GM12878 (cell line): ENCODE measurements at regions of chr6 and their contacts with region 1.

Region 1: DNA sequence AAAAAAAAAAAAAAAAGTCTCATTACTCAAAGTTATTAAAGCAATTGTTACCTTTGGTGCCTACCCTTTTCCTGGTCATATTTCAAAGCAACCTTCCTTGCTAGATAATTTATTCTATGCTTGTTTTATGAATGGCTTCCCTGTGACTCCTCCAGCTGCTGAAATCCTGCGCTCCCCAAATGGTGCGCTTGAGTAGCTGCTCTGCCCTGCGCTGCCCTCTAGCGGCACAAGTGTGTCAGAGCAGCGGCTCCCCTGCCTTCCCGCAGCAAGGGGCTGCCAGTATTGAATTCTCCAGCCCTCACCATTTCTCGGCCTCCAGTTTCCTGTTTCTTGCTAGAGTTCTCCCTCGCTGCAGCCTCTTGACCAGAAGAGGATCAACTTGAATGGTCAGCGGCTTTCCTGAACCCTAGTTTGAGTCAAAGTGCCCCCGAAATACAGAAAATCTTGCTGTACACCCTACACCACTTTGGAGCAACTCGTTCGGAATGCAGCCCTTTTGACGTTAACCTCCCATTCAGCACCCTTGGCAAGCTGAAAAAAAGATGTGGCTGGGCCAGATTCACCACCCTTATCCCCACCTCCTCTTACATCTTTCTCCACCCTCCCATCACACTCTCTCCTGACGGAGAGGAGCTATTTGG is 60.4 kb upstream of the KLHL31 start:
- DNase-seq: no peak
- ATAC-seq: peak; percentile 96
- H3K4me3 ChIP-seq: no peak overlapping the region
- H3K27ac ChIP-seq: no peak overlapping the region
- H3K4me1 ChIP-seq: no peaks in the 10 kb centered on the region
- H3K27me3 ChIP-seq: no peaks in the 10 kb centered on the region; a peak in 1 of 4 replicates
- CTCF ChIP-seq: peak; percentile 93 to 97 (median 95)
- EP300 ChIP-seq: no peak
- POLR2A ChIP-seq: no peak
- RAD21 ChIP-seq: peak; percentile 81

Region 2: DNA sequence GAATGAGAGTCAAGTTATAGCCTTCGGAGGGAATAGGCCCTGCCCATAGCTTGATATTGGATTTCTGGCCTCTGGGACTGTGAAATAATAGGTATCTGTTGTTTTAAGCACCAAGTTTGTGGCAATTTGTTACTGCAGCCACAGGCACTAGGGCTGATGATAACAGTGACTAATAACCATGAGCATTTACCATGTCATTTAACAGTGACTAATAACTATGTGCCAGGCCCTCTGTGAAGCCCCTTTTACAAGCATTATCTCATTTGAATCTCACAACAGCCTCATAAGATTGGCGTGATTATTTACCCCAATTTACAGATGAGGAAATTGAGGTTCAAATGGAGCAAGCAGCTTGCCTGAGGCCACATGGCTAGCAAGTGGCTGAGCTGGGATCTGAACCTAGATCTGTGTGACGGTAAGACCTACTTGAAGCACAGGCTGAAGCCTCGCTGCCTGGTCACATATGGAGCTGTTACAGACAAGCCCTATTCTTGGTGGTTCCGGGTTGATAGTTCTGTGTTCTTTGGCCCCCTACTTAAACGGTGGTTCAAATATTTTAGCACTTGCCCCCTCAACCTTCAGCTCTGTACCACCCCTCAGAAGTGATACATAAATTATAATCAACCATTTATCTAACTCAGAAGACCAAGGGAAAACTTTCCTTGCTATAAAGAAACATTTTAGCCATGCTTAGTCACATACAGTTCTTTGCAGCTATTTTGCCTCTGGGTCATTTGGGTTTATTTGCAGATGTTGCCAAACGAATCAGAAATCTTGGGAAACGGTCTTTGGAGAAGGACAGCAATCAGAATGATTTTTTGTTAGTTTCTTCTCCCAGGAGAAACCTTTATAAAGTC is 475.5 kb before region 1 on chr6:
- CTCF ChIA-PET with region 1: no interaction called
- POLR2A ChIA-PET with region 1: no interaction called
- RAD21 ChIA-PET with region 1: no interaction called
- SMC1A ChIA-PET with region 1: no interaction called
- in situ Hi-C with region 1: no loop called
- intact Hi-C with region 1: loop called (anchors 10 kb)
- DNase-seq: no peak
- ATAC-seq: peak; percentile 59
- H3K4me3 ChIP-seq: no peak overlapping the region
- H3K27ac ChIP-seq: no peak overlapping the region
- H3K4me1 ChIP-seq: peaks cover 3% of the 10 kb centered on the region
- H3K27me3 ChIP-seq: no peaks in the 10 kb centered on the region
- CTCF ChIP-seq: no peak
- EP300 ChIP-seq: no peak
- POLR2A ChIP-seq: no peak
- RAD21 ChIP-seq: no peak

Region 3: GRCh38 chr6:53544470-53545308 is 181.2 kb before region 1 on chr6 and contains the start of gene GCLC:
- CTCF ChIA-PET with region 1: interaction called, 5 read pairs
- POLR2A ChIA-PET with region 1: no interaction called
- RAD21 ChIA-PET with region 1: no interaction called
- SMC1A ChIA-PET with region 1: interaction called, 4 read pairs
- in situ Hi-C with region 1: no loop called
- intact Hi-C with region 1: loop called (anchors 5 kb)
- DNase-seq: peak; percentile 74
- ATAC-seq: peak; percentile 78
- H3K4me3 ChIP-seq: peak within 1 kb of the TSS; percentile 92
- H3K27ac ChIP-seq: peak within 1 kb of the TSS; percentile 61
- H3K4me1 ChIP-seq: peaks cover 9% of the 10 kb centered on the region
- H3K27me3 ChIP-seq: peaks cover 0 to 6% of the 10 kb centered on the region in 2 experiments; a peak in 1 of 4 replicates
- CTCF ChIP-seq: peak; percentile 55 to 65 (median 59); a peak in 5 of 6 replicates
- EP300 ChIP-seq: no peak; a peak in 1 of 4 replicates
- POLR2A ChIP-seq: peak; percentile 84
- RAD21 ChIP-seq: peak; percentile 44
- polyA plus RNA-seq, gene GCLC: 7.8 to 8.9 TPM

Region 4: DNA sequence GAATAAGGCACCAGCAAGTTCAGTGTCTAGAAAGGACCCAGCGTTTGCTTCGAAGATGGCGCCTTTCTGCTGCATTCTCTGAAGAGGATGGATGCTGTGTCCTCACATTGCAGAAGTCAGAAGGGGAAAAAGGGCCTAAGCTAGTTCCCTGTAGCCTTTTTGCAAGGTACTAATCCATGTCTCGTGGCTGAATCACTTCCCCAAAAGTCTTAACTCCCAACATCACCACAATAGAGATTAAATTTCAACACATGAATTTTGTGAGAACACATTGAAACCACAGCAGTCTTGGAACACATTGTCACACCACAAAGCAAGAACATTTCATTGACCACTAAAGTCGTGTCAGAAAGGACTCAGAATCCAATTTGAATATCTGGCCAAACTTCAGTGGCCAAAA is 102.4 kb before region 1 on chr6:
- CTCF ChIA-PET with region 1: no interaction called
- POLR2A ChIA-PET with region 1: no interaction called
- RAD21 ChIA-PET with region 1: no interaction called
- SMC1A ChIA-PET with region 1: no interaction called
- in situ Hi-C with region 1: no loop called
- intact Hi-C with region 1: no loop called
- DNase-seq: no peak
- ATAC-seq: no peak
- H3K4me3 ChIP-seq: no peak overlapping the region
- H3K27ac ChIP-seq: no peak overlapping the region
- H3K4me1 ChIP-seq: no peaks in the 10 kb centered on the region
- H3K27me3 ChIP-seq: peaks cover 2% of the 10 kb centered on the region in 2 experiments; a peak in 2 of 4 replicates
- CTCF ChIP-seq: no peak
- EP300 ChIP-seq: no peak
- POLR2A ChIP-seq: no peak
- RAD21 ChIP-seq: no peak

Region 5: GRCh38 chr6:53703047-53703446 is 22.9 kb before region 1 on chr6:
- CTCF ChIA-PET with region 1: interaction called, 116 read pairs
- POLR2A ChIA-PET with region 1: no interaction called
- RAD21 ChIA-PET with region 1: no interaction called
- SMC1A ChIA-PET with region 1: interaction called, 4 read pairs
- in situ Hi-C with region 1: no loop called
- intact Hi-C with region 1: no loop called
- DNase-seq: no peak
- ATAC-seq: no peak
- H3K4me3 ChIP-seq: no peak overlapping the region
- H3K27ac ChIP-seq: no peak overlapping the region
- H3K4me1 ChIP-seq: no peaks in the 10 kb centered on the region
- H3K27me3 ChIP-seq: no peaks in the 10 kb centered on the region
- CTCF ChIP-seq: no peak
- EP300 ChIP-seq: no peak
- POLR2A ChIP-seq: no peak
- RAD21 ChIP-seq: no peak

Region 6: DNA sequence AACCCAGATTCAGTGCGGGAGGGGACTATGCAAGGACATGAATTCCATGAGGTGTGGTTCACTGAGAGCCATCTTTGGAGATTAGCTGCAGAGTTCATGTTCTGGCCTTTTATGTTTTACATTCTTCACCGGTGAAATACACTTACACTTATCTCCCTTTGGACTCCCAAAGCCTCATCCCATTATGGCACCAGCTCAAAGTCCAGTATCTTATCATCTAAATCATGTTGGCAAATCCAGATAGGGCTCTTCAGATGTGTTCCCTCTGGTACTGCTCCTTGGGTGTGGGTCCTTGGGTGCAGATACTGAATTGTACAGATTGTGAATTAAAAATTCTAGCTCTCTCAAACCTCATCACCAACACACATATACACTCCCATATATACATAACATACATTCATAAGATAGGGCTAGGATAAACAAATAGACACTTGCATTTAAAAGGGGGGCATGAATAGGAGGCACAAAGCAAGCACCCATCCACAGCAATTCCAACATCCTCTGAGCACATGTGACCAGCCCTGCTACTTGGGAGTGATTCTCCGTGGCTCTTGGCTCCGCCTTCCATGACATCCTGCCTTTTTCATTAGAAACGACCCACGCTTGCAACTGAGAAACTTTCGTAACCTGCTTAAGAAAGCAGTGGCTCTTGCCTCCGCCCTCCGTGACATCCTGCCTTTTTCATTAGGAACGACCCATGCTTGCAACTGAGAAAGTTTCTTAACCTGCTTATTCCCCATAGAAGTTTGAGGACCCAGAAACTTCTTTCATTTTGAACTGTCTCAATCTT is 15.3 kb after region 1 on chr6:
- CTCF ChIA-PET with region 1: interaction called, 53 read pairs
- POLR2A ChIA-PET with region 1: no interaction called
- RAD21 ChIA-PET with region 1: no interaction called
- SMC1A ChIA-PET with region 1: interaction called, 4 read pairs
- in situ Hi-C with region 1: no loop called
- intact Hi-C with region 1: no loop called
- DNase-seq: no peak
- ATAC-seq: no peak
- H3K4me3 ChIP-seq: no peak overlapping the region
- H3K27ac ChIP-seq: no peak overlapping the region
- H3K4me1 ChIP-seq: no peaks in the 10 kb centered on the region
- H3K27me3 ChIP-seq: no peaks in the 10 kb centered on the region
- CTCF ChIP-seq: no peak
- EP300 ChIP-seq: no peak
- POLR2A ChIP-seq: no peak
- RAD21 ChIP-seq: no peak

Region 7: DNA sequence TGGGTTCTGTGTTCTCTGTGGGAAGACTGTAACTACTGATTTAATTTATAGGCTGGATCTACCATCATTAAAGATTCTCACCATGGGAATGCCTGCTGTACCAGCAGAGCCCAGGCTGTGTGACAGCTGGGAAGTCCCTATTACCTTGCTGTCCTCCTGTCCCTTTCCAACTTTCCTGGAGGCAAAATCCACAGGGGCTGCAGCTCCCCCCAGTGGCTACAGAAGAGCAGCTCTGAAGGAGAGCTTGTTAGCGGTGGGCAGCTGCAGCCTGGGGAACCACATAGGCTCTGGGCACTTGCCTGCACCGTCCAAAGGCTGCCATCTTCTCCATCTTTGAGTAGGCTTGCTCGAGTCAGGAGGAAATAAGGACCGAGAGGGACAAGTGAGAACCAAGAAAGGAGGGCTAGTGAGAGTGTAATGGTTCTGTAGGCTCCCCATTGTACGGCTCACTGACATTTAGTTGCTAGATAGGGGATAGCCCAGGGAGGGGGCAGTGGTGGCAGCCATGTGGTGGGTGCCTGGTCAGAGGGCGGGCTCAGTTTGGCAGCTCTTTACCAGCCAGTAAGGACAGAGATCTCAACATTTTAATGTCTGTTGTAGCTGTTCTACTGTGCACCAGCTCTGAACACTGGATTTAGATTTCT is 230.3 kb after region 1 on chr6:
- CTCF ChIA-PET with region 1: interaction called, 32 read pairs
- POLR2A ChIA-PET with region 1: no interaction called
- RAD21 ChIA-PET with region 1: interaction called, 9 read pairs
- SMC1A ChIA-PET with region 1: interaction called, 6 read pairs
- in situ Hi-C with region 1: no loop called
- intact Hi-C with region 1: loop called (anchors 5 kb)
- DNase-seq: peak; percentile 8
- ATAC-seq: peak; percentile 94
- H3K4me3 ChIP-seq: no peak overlapping the region
- H3K27ac ChIP-seq: no peak overlapping the region
- H3K4me1 ChIP-seq: no peaks in the 10 kb centered on the region
- H3K27me3 ChIP-seq: no peaks in the 10 kb centered on the region; a peak in 1 of 4 replicates
- CTCF ChIP-seq: peak; percentile 36 to 58 (median 54); a peak in 5 of 6 replicates
- EP300 ChIP-seq: no peak
- POLR2A ChIP-seq: no peak
- RAD21 ChIP-seq: 0 out of 2 replicates have a peak, but pooled peaks have one; percentile 10